CD4-positive, alpha-beta memory T cell (primary cell): ENCODE measurements at regions of chr19 and their contacts with region 1.

Region 1: GRCh38 chr19:11435058-11435832 is at the starts of genes ODAD3 and PRKCSH:
- DNase-seq: peak; percentile 99
- H3K4me3 ChIP-seq: peak within 1 kb of the TSS; percentile 95 to 97
- H3K4me3 Mint-ChIP-seq: peak within 1 kb of the TSS; percentile 97 to 100 (median 99)
- H3K27ac ChIP-seq: peak within 1 kb of the TSS; percentile 74
- H3K27ac Mint-ChIP-seq: peak within 1 kb of the TSS; percentile 95 to 100 (median 98)
- H3K4me1 ChIP-seq: peaks cover 19% of the 10 kb centered on the region
- H3K4me1 Mint-ChIP-seq: peaks cover 14 to 31% (median 23%) of the 10 kb centered on the region in 4 donors
- H3K27me3 ChIP-seq: no peaks in the 10 kb centered on the region
- H3K27me3 Mint-ChIP-seq: peaks cover 2 to 3% of the 10 kb centered on the region in 2 donors
- total RNA-seq, gene ODAD3: not detected
- total RNA-seq, gene PRKCSH: 300 TPM

Region 2: GRCh38 chr19:11155373-11156120 is 279.7 kb before region 1 on chr19 and contains the start of gene SPC24:
- CTCF ChIA-PET with region 1: no interaction called
- POLR2A ChIA-PET with region 1: no interaction called
- intact Hi-C with region 1: loop called (anchors 1 kb)
- DNase-seq: peak; percentile 88 to 94 (median 93)
- H3K4me3 ChIP-seq: peak within 1 kb of the TSS; percentile 74 to 84
- H3K4me3 Mint-ChIP-seq: peak within 1 kb of the TSS; percentile 85 to 94 (median 88)
- H3K27ac ChIP-seq: peak within 1 kb of the TSS; percentile 20
- H3K27ac Mint-ChIP-seq: peak within 1 kb of the TSS; percentile 55 to 93 (median 82)
- H3K4me1 ChIP-seq: peaks cover 20% of the 10 kb centered on the region
- H3K4me1 Mint-ChIP-seq: peaks cover 7 to 19% (median 14%) of the 10 kb centered on the region in 4 donors
- H3K27me3 ChIP-seq: no peaks in the 10 kb centered on the region
- H3K27me3 Mint-ChIP-seq: no peaks in the 10 kb centered on the region
- total RNA-seq, gene SPC24: 0.84 to 1.9 TPM

Region 3: DNA sequence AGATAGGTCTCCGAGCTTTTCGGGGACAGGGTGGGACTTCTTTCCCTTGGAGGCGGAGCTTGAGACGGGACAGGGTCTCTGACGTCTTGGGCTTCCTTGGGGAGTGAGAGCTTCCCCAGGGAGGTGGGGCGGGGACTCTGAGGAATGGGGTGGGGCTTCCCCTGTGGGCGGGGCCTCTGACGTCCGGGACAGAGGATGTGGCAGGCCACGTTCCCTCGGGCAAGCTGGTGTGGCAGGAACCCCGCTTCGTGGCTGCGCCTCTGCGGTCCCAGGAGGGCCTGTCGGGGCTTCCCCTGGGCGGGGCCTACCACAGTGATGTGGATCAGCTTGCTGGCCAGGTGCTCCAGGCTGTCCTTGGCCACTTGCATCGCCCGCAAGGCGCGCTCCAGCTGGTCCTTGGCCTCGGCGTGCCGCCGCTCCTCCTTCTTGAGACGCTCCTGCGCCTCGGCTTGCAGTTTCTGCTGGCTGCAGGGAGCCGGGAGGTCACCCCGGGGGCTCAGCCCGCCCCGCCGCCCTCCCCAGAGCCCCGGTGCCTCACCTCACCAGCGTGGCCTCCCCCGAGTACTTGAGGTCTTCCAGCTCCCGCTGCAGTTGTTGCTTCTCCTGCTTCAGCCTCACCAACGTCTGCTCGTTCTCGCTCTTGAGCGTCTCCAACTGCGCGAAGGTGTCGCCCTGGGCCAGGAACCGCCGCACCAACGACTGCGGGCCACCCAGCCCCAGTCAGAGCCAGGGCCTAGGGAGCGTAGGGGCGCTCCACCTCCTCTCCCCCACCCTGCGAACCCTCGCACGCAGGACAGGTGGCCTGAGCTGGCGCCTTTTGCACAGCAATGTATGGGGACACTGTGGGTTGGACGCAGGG is 12.9 kb before region 1 on chr19:
- CTCF ChIA-PET with region 1: interaction called, 4 read pairs
- POLR2A ChIA-PET with region 1: interaction called, 5 read pairs
- intact Hi-C with region 1: loop called (anchors 1 kb)
- DNase-seq: peak; percentile 57 to 76 (median 66)
- H3K4me3 ChIP-seq: peak overlapping the region in 1 of 2 donors; percentile 37
- H3K4me3 Mint-ChIP-seq: peak overlapping the region; percentile 72 to 89 (median 82)
- H3K27ac ChIP-seq: no peak overlapping the region
- H3K27ac Mint-ChIP-seq: peak overlapping the region in 5 of 7 donors; percentile 23 to 78 (median 54)
- H3K4me1 ChIP-seq: peaks cover 49% of the 10 kb centered on the region
- H3K4me1 Mint-ChIP-seq: peaks cover 15 to 47% (median 36%) of the 10 kb centered on the region in 4 donors
- H3K27me3 ChIP-seq: peaks cover 43% of the 10 kb centered on the region
- H3K27me3 Mint-ChIP-seq: peaks cover 39 to 45% of the 10 kb centered on the region in 2 donors

Region 4: GRCh38 chr19:11505032-11505503 is 69.8 kb after region 1 on chr19:
- CTCF ChIA-PET with region 1: no interaction called
- POLR2A ChIA-PET with region 1: no interaction called
- intact Hi-C with region 1: loop called (anchors 1 kb)
- DNase-seq: peak; percentile 95 to 97 (median 96)
- H3K4me3 ChIP-seq: peak overlapping the region; percentile 59 to 71
- H3K4me3 Mint-ChIP-seq: peak overlapping the region; percentile 79 to 94 (median 86)
- H3K27ac ChIP-seq: peak overlapping the region; percentile 95
- H3K27ac Mint-ChIP-seq: peak overlapping the region; percentile 88 to 94 (median 92)
- H3K4me1 ChIP-seq: peaks cover 14% of the 10 kb centered on the region
- H3K4me1 Mint-ChIP-seq: peaks cover 15 to 28% (median 18%) of the 10 kb centered on the region in 4 donors
- H3K27me3 ChIP-seq: no peaks in the 10 kb centered on the region
- H3K27me3 Mint-ChIP-seq: no peaks in the 10 kb centered on the region

Region 5: GRCh38 chr19:11558881-11559828 is 123.9 kb after region 1 on chr19 and contains the start of gene ELOF1:
- CTCF ChIA-PET with region 1: no interaction called
- POLR2A ChIA-PET with region 1: no interaction called
- intact Hi-C with region 1: loop called (anchors 1 kb)
- DNase-seq: peak; percentile 95 to 98 (median 96)
- H3K4me3 ChIP-seq: peak within 1 kb of the TSS; percentile 59 to 91
- H3K4me3 Mint-ChIP-seq: peak within 1 kb of the TSS; percentile 95 to 99 (median 98)
- H3K27ac ChIP-seq: peak within 1 kb of the TSS; percentile 72
- H3K27ac Mint-ChIP-seq: peak within 1 kb of the TSS; percentile 73 to 99 (median 98)
- H3K4me1 ChIP-seq: peaks cover 31% of the 10 kb centered on the region
- H3K4me1 Mint-ChIP-seq: peaks cover 28 to 54% (median 43%) of the 10 kb centered on the region in 4 donors
- H3K27me3 ChIP-seq: no peaks in the 10 kb centered on the region
- H3K27me3 Mint-ChIP-seq: no peaks in the 10 kb centered on the region
- total RNA-seq, gene ELOF1: 46.0 to 48.5 TPM